Pancreas (tissue), 10 donors: ENCODE measurements at regions of chr20 and their contacts with region 1.

Region 1: GRCh38 chr20:57124800-57125399 is 141.5 kb downstream of the BMP7 start:
- DNase-seq: no peak
- ATAC-seq: no peak
- H3K4me3 ChIP-seq: no peak overlapping the region
- H3K27ac ChIP-seq: no peak overlapping the region
- H3K4me1 ChIP-seq: no peaks in the 10 kb centered on the region
- H3K27me3 ChIP-seq: peaks cover 0 to 4% (median 0%) of the 10 kb centered on the region in 4 donors
- CTCF ChIP-seq: no peak

Region 2: GRCh38 chr20:57180406-57181353 is 55.8 kb after region 1 on chr20:
- intact Hi-C with region 1: loop called in 1 of 3 experiments (anchors 10 kb)
- DNase-seq: peak in 3 of 6 donors; percentile 11 to 28 (median 28)
- ATAC-seq: peak in 3 of 4 donors; percentile 69 to 91 (median 84)
- H3K4me3 ChIP-seq: no peak overlapping the region
- H3K27ac ChIP-seq: no peak overlapping the region
- H3K4me1 ChIP-seq: no peaks in the 10 kb centered on the region
- H3K27me3 ChIP-seq: no peaks in the 10 kb centered on the region
- CTCF ChIP-seq: peak in 1 of 4 donors; percentile 9